ENCODE measurements at regions of chr17 and their contacts with region 1.

Region 1: GRCh38 chr17:32486111-32486700 is 587 bp upstream of the CDK5R1 start:
- DNase-seq: no peak
- ATAC-seq: peak; percentile 62
- H3K4me3 ChIP-seq: peak overlapping the region; percentile 28; the same call in 1 of the 2 replicates
- H3K27ac ChIP-seq: 0 out of 2 replicates have a peak overlapping the region, but pooled peaks have one; percentile 33
- H3K4me1 ChIP-seq: peaks cover 11% of the 10 kb centered on the region
- H3K27me3 ChIP-seq: no peaks in the 10 kb centered on the region
- CTCF ChIP-seq: no peak
- EP300 ChIP-seq: no peak
- POLR2A ChIP-seq: peak; percentile 32; the same call in 1 of the 2 replicates
- RAD21 ChIP-seq: no peak

Region 2: GRCh38 chr17:32319548-32319905 is 166.7 kb before region 1 on chr17:
- CTCF ChIA-PET with region 1: no interaction called
- POLR2A ChIA-PET with region 1: no interaction called
- RAD21 ChIA-PET with region 1: no interaction called
- SMC1A ChIA-PET with region 1: no interaction called
- in situ Hi-C with region 1: no loop called
- intact Hi-C with region 1: no loop called
- DNase-seq: peak; percentile 55
- ATAC-seq: peak; percentile 89
- H3K4me3 ChIP-seq: no peak overlapping the region
- H3K27ac ChIP-seq: no peak overlapping the region
- H3K4me1 ChIP-seq: peaks cover 7% of the 10 kb centered on the region
- H3K27me3 ChIP-seq: peaks cover 0 to 2% of the 10 kb centered on the region in 2 experiments; a peak in 3 of 4 replicates
- CTCF ChIP-seq: peak; percentile 96 to 99 (median 97); a peak in 5 of 6 replicates
- EP300 ChIP-seq: 0 out of 4 replicates have a peak, but pooled peaks of 1 of the 2 experiments have one; percentile 20
- POLR2A ChIP-seq: no peak
- RAD21 ChIP-seq: peak; percentile 92

Region 3: GRCh38 chr17:32503251-32504165 is 17.3 kb after region 1 on chr17:
- CTCF ChIA-PET with region 1: interaction called, 12 read pairs
- POLR2A ChIA-PET with region 1: interaction called, 308 read pairs
- RAD21 ChIA-PET with region 1: interaction called, 24 read pairs
- SMC1A ChIA-PET with region 1: interaction called, 286 read pairs
- in situ Hi-C with region 1: no loop called
- intact Hi-C with region 1: no loop called
- DNase-seq: peak; percentile 98
- ATAC-seq: peak; percentile 95
- H3K4me3 ChIP-seq: peak overlapping the region; percentile 37; the same call in 1 of the 2 replicates
- H3K27ac ChIP-seq: peak overlapping the region; percentile 87
- H3K4me1 ChIP-seq: peaks cover 27% of the 10 kb centered on the region
- H3K27me3 ChIP-seq: no peaks in the 10 kb centered on the region
- CTCF ChIP-seq: no peak
- EP300 ChIP-seq: peak; percentile 92 to 94
- POLR2A ChIP-seq: peak; percentile 61
- RAD21 ChIP-seq: 0 out of 2 replicates have a peak, but pooled peaks have one; percentile 15

Region 4: DNA sequence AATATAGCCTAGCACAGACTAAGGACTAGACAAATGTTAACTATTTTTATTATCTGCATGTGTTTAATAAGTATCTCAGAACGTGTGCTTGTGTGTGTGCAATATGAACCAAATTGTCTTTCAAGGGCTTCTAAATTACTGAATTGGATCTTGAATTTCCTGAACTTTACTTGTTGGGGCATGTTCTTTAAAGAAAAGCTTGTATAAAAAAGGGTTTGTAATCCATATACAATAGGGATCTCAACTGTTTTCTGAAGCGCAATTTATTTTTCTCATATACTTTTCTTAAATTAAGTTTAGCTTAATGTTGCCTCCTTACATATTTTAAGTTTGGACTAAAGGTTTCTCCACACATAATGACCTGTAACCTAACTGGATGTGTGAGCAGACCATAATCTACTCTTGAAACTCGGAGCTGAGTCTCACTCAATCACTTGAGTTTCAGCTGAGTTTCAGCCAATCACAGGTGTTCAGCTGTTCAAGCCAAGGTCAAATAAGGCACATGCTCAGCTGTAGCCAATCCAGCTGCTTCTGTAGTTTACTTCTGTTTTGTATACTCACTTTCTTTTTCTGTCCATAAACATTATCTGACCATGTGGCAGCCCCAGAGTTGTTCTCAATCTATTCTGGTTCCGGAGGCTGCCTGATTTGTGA is 72.9 kb after region 1 on chr17:
- CTCF ChIA-PET with region 1: interaction called, 11 read pairs
- POLR2A ChIA-PET with region 1: interaction called, 26 read pairs
- RAD21 ChIA-PET with region 1: interaction called, 43 read pairs
- SMC1A ChIA-PET with region 1: interaction called, 60 read pairs
- in situ Hi-C with region 1: no loop called
- intact Hi-C with region 1: loop called (anchors 2 kb)
- DNase-seq: peak; percentile 92
- ATAC-seq: peak; percentile 97
- H3K4me3 ChIP-seq: no peak overlapping the region
- H3K27ac ChIP-seq: peak overlapping the region; percentile 94
- H3K4me1 ChIP-seq: peaks cover 43% of the 10 kb centered on the region
- H3K27me3 ChIP-seq: no peaks in the 10 kb centered on the region
- CTCF ChIP-seq: no peak
- EP300 ChIP-seq: no peak
- POLR2A ChIP-seq: no peak; the same call in 1 of the 2 replicates
- RAD21 ChIP-seq: no peak

Region 5: DNA sequence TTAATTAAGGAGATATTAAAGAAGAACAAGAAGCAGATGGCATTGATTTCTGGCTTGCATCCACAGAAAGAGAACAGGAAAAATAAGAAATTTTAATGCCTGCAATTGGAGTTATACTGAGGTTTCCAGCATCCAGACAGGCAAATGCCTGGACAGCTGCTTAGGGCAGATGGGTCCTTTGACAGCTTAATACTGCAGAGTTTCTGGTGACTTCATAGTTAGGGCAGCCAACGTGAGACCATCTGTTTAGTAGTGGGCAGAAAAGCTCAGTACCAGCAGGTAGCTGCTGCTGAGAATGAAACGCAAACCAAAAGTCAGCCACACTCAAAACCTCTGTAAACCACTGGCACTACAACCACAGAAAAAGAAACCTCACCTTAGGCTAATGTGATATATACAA is 110.4 kb after region 1 on chr17:
- CTCF ChIA-PET with region 1: interaction called, 132 read pairs
- POLR2A ChIA-PET with region 1: no interaction called
- RAD21 ChIA-PET with region 1: interaction called, 11 read pairs
- SMC1A ChIA-PET with region 1: interaction called, 3 read pairs
- in situ Hi-C with region 1: no loop called
- intact Hi-C with region 1: no loop called
- DNase-seq: peak; percentile 62
- ATAC-seq: peak; percentile 98
- H3K4me3 ChIP-seq: no peak overlapping the region
- H3K27ac ChIP-seq: no peak overlapping the region
- H3K4me1 ChIP-seq: peaks cover 15% of the 10 kb centered on the region
- H3K27me3 ChIP-seq: no peaks in the 10 kb centered on the region
- CTCF ChIP-seq: no peak
- EP300 ChIP-seq: no peak
- POLR2A ChIP-seq: no peak
- RAD21 ChIP-seq: no peak

Region 6: GRCh38 chr17:32755045-32755805 is 269.0 kb after region 1 on chr17:
- CTCF ChIA-PET with region 1: interaction called, 57 read pairs
- POLR2A ChIA-PET with region 1: interaction called, 3 read pairs
- RAD21 ChIA-PET with region 1: interaction called, 22 read pairs
- SMC1A ChIA-PET with region 1: interaction called, 28 read pairs
- in situ Hi-C with region 1: no loop called
- intact Hi-C with region 1: loop called (anchors 1 kb)
- DNase-seq: no peak
- ATAC-seq: peak; percentile 73
- H3K4me3 ChIP-seq: no peak overlapping the region
- H3K27ac ChIP-seq: no peak overlapping the region
- H3K4me1 ChIP-seq: no peaks in the 10 kb centered on the region
- H3K27me3 ChIP-seq: no peaks in the 10 kb centered on the region
- CTCF ChIP-seq: peak in 2 of 3 experiments; percentile 19 to 56; a peak in 4 of 6 replicates
- EP300 ChIP-seq: no peak
- POLR2A ChIP-seq: no peak
- RAD21 ChIP-seq: peak; percentile 83

Region 7: DNA sequence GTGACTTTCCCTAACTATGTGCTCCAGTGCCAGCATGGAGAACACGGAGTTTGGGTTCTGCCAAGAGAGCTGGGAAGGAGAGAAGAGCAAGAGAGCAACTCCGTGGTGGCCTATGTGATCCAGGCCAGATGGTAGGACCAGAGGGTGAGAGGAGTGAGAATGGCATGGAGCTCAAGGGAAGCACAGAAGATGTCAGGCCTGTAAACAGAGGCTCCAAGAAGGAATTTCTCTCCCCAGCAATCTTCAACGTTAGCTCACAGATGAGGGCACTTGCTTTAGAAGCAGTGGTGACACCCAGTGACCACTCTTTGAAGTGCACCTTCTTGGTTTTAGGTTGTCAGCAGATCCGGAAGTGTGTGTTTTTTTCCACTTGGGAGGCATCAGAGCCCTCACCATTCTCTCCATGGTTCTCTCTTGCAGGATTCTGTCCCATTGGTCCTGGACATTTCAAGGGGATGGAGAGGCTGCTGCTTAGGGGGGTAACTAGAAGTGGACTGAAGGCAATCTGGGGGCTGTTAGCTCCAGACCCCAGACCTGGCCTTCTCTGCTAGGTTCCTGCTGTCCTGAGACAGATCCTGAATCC is 423.7 kb after region 1 on chr17:
- CTCF ChIA-PET with region 1: interaction called, 13 read pairs
- POLR2A ChIA-PET with region 1: no interaction called
- RAD21 ChIA-PET with region 1: interaction called, 4 read pairs
- SMC1A ChIA-PET with region 1: interaction called, 14 read pairs
- in situ Hi-C with region 1: no loop called
- intact Hi-C with region 1: no loop called
- DNase-seq: peak; percentile 46
- ATAC-seq: peak; percentile 97
- H3K4me3 ChIP-seq: no peak overlapping the region
- H3K27ac ChIP-seq: no peak overlapping the region
- H3K4me1 ChIP-seq: no peaks in the 10 kb centered on the region
- H3K27me3 ChIP-seq: no peaks in the 10 kb centered on the region
- CTCF ChIP-seq: peak; percentile 85 to 94 (median 91)
- EP300 ChIP-seq: no peak
- POLR2A ChIP-seq: no peak
- RAD21 ChIP-seq: peak; percentile 87

Region 8: GRCh38 chr17:33550261-33550660 is 1064.1 kb after region 1 on chr17:
- CTCF ChIA-PET with region 1: no interaction called
- POLR2A ChIA-PET with region 1: no interaction called
- RAD21 ChIA-PET with region 1: no interaction called
- SMC1A ChIA-PET with region 1: no interaction called
- in situ Hi-C with region 1: no loop called
- intact Hi-C with region 1: no loop called
- DNase-seq: no peak
- ATAC-seq: no peak
- H3K4me3 ChIP-seq: no peak overlapping the region
- H3K27ac ChIP-seq: no peak overlapping the region
- H3K4me1 ChIP-seq: no peaks in the 10 kb centered on the region
- H3K27me3 ChIP-seq: no peaks in the 10 kb centered on the region; a peak in 1 of 4 replicates
- CTCF ChIP-seq: no peak
- EP300 ChIP-seq: no peak
- POLR2A ChIP-seq: no peak
- RAD21 ChIP-seq: no peak

Measured in GM12878 (cell line).